ENCODE measurements at regions of chr11 and their contacts with region 1.

Region 1: GRCh38 chr11:8033305-8034105 is 46.4 kb downstream of the EIF3F start:
- DNase-seq: peak in 7 of 9 experiments; percentile 27 to 68 (median 49)
- ATAC-seq: peak; percentile 85
- H3K4me3 ChIP-seq: no peak overlapping the region
- H3K4me3 Mint-ChIP-seq: no peak overlapping the region
- H3K27ac ChIP-seq: no peak overlapping the region
- H3K27ac Mint-ChIP-seq: no peak overlapping the region
- H3K4me1 ChIP-seq: peaks cover 8% of the 10 kb centered on the region
- H3K4me1 Mint-ChIP-seq: peaks cover 6% of the 10 kb centered on the region
- H3K27me3 ChIP-seq: peaks cover 3 to 7% of the 10 kb centered on the region in 2 experiments
- H3K27me3 Mint-ChIP-seq: peaks cover 30% of the 10 kb centered on the region
- CTCF ChIP-seq: peak; percentile 61

Region 2: GRCh38 chr11:8006349-8006977 is 27.0 kb before region 1 on chr11:
- CTCF ChIA-PET with region 1: interaction called, 11 read pairs
- POLR2A ChIA-PET with region 1: no interaction called
- intact Hi-C with region 1: no loop called
- DNase-seq: peak in 8 of 9 experiments; percentile 14 to 68 (median 44)
- ATAC-seq: peak; percentile 49
- H3K4me3 ChIP-seq: no peak overlapping the region
- H3K4me3 Mint-ChIP-seq: no peak overlapping the region
- H3K27ac ChIP-seq: no peak overlapping the region
- H3K27ac Mint-ChIP-seq: no peak overlapping the region
- H3K4me1 ChIP-seq: no peaks in the 10 kb centered on the region
- H3K4me1 Mint-ChIP-seq: no peaks in the 10 kb centered on the region
- H3K27me3 ChIP-seq: peaks cover 0 to 2% of the 10 kb centered on the region in 2 experiments
- H3K27me3 Mint-ChIP-seq: peaks cover 14% of the 10 kb centered on the region
- CTCF ChIP-seq: peak; percentile 49

Region 3: DNA sequence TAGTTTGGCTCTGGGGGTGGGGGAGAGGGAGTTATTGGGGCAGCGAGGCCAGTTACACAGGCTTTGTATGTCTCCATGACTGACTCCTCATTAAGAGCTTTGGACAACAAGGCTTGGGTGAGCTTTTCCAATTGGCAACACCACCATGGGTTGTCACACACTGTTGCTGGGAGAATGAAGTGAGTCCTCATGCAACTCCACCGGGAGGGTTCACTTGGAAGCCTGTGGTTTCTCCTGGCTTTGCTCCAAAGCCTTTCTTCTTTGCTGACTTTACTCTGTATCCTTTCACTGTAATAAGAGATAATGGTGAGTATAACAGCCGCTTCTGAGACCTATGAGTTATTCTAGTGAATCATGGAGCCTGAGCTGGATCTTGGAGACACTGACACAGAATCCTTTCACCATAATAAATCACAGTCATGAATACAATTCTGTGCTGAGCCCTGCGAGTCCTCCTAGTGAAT is 21.5 kb before region 1 on chr11:
- CTCF ChIA-PET with region 1: interaction called, 11 read pairs
- POLR2A ChIA-PET with region 1: interaction called, 3 read pairs
- intact Hi-C with region 1: no loop called
- DNase-seq: peak in 1 of 9 experiments; percentile 21
- ATAC-seq: no peak
- H3K4me3 ChIP-seq: no peak overlapping the region
- H3K4me3 Mint-ChIP-seq: no peak overlapping the region
- H3K27ac ChIP-seq: no peak overlapping the region
- H3K27ac Mint-ChIP-seq: no peak overlapping the region
- H3K4me1 ChIP-seq: no peaks in the 10 kb centered on the region
- H3K4me1 Mint-ChIP-seq: no peaks in the 10 kb centered on the region
- H3K27me3 ChIP-seq: peaks cover 0 to 4% of the 10 kb centered on the region in 2 experiments
- H3K27me3 Mint-ChIP-seq: peaks cover 30% of the 10 kb centered on the region
- CTCF ChIP-seq: no peak

Region 4: DNA sequence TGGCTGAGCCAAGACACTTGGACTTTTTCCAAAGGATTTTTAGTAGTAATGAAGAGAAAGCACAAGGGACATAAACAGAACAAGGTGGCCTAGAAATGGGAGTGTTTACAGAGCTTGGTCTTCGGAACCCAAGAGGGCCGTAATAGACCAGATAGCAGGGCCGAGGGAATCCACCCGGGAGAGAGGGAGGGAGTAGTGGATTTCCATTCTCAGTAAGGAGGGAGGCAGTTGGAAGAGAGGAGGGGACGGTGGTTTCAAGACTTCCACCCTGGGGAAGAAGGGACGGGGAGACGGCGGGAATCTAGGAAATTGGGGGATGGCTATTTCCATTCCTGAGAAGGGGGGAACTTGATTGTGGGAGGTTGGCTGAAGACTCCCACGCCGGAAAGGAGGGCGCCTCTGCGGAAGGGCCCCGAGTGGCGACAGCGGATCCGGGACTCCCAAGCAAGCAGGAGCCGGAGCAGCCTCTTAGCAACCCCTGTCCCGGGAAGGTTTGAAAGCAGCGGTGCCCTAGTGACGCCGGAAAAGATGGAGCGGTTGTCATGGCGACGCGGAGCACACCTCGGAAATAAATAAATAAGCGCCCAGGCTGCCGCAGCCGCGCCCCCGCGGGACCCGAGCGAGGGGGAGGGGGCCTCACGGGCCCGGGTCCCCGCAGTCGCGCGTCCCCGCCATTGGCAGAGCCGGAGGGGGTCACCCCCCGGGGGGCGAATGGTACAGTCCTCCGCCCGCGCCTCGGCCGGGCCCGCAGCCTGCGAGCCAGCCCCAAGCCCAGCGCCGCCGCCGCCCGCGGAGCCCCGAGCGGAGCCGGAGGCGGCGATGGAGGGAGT is 14.8 kb before region 1 on chr11:
- CTCF ChIA-PET with region 1: interaction called, 19 read pairs
- POLR2A ChIA-PET with region 1: interaction called, 3 read pairs
- intact Hi-C with region 1: no loop called
- DNase-seq: peak; percentile 43 to 93 (median 69)
- ATAC-seq: peak; percentile 69
- H3K4me3 ChIP-seq: peak overlapping the region; percentile 54 to 68
- H3K4me3 Mint-ChIP-seq: peak overlapping the region; percentile 81
- H3K27ac ChIP-seq: peak overlapping the region; percentile 39 to 60
- H3K27ac Mint-ChIP-seq: peak overlapping the region; percentile 13
- H3K4me1 ChIP-seq: peaks cover 12% of the 10 kb centered on the region
- H3K4me1 Mint-ChIP-seq: peaks cover 13% of the 10 kb centered on the region
- H3K27me3 ChIP-seq: peaks cover 11 to 17% of the 10 kb centered on the region in 2 experiments
- H3K27me3 Mint-ChIP-seq: peaks cover 34% of the 10 kb centered on the region
- CTCF ChIP-seq: no peak

Region 5: GRCh38 chr11:8075119-8075726 is 41.7 kb after region 1 on chr11:
- CTCF ChIA-PET with region 1: no interaction called
- POLR2A ChIA-PET with region 1: no interaction called
- intact Hi-C with region 1: no loop called
- DNase-seq: no peak
- ATAC-seq: no peak
- H3K4me3 ChIP-seq: no peak overlapping the region
- H3K4me3 Mint-ChIP-seq: no peak overlapping the region
- H3K27ac ChIP-seq: no peak overlapping the region
- H3K27ac Mint-ChIP-seq: no peak overlapping the region
- H3K4me1 ChIP-seq: no peaks in the 10 kb centered on the region
- H3K4me1 Mint-ChIP-seq: no peaks in the 10 kb centered on the region
- H3K27me3 ChIP-seq: peaks cover 0 to 2% of the 10 kb centered on the region in 2 experiments
- H3K27me3 Mint-ChIP-seq: peaks cover 24% of the 10 kb centered on the region
- CTCF ChIP-seq: no peak

Region 6: DNA sequence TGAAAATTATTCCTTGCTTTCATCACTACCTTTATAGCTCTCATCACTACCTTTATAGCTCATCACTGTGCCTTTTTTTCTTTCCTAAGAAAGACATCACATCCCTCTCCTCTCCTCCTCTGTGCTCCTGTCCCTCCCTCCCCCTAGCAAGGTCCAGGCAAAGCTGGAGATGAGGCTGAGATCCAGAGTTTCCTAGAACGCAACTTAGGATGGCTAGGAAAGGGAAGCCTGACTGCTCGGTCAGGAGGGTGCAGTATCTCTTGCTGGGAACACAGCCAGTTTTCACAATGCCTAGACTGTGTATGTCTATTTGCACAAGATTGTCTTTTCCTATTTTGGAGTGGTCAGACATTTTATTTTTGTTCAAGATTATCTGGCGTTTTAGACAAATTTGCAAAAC is 72.2 kb after region 1 on chr11:
- CTCF ChIA-PET with region 1: interaction called, 109 read pairs
- POLR2A ChIA-PET with region 1: no interaction called
- intact Hi-C with region 1: no loop called
- DNase-seq: no peak
- ATAC-seq: no peak
- H3K4me3 ChIP-seq: no peak overlapping the region
- H3K4me3 Mint-ChIP-seq: no peak overlapping the region
- H3K27ac ChIP-seq: no peak overlapping the region
- H3K27ac Mint-ChIP-seq: no peak overlapping the region
- H3K4me1 ChIP-seq: no peaks in the 10 kb centered on the region
- H3K4me1 Mint-ChIP-seq: no peaks in the 10 kb centered on the region
- H3K27me3 ChIP-seq: no peaks in the 10 kb centered on the region
- H3K27me3 Mint-ChIP-seq: no peaks in the 10 kb centered on the region
- CTCF ChIP-seq: no peak

Region 7: GRCh38 chr11:8566613-8567210 is 533.2 kb after region 1 on chr11:
- CTCF ChIA-PET with region 1: interaction called, 5 read pairs
- POLR2A ChIA-PET with region 1: no interaction called
- intact Hi-C with region 1: loop called in 1 of 2 experiments (anchors 2 kb)
- DNase-seq: peak in 2 of 9 experiments; percentile 31 to 47
- ATAC-seq: no peak
- H3K4me3 ChIP-seq: no peak overlapping the region
- H3K4me3 Mint-ChIP-seq: no peak overlapping the region
- H3K27ac ChIP-seq: no peak overlapping the region
- H3K27ac Mint-ChIP-seq: no peak overlapping the region
- H3K4me1 ChIP-seq: no peaks in the 10 kb centered on the region
- H3K4me1 Mint-ChIP-seq: no peaks in the 10 kb centered on the region
- H3K27me3 ChIP-seq: peaks cover 0 to 3% of the 10 kb centered on the region in 2 experiments
- H3K27me3 Mint-ChIP-seq: peaks cover 17% of the 10 kb centered on the region
- CTCF ChIP-seq: peak; percentile 79

Measured in CD8-positive, alpha-beta T cell (primary cell).